PC-3 (cell line): ENCODE measurements at regions of chr12 and their contacts with region 1.

Region 1: DNA sequence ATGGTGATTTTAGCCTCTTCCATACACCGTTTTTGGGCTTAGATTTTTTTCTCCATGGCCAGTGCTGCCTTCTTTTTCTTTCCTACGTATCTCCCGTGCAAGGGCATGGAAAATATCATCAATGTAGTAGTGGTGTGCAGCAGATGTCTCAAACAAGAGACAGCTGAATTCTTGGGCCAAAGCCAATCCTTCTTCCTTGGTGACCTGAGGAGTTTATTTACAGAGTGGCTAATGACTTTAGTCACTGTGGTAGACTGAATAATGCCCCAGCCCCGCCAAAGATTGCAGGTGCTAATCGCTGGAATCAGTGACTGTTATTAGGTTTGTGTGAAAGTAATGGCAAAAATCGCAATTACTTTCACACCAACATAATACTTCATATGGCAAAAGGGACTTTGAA is 235.5 kb upstream of the NOS1 start:
- DNase-seq: peak; percentile 91
- ATAC-seq: peak; percentile 81
- H3K4me3 ChIP-seq: no peak overlapping the region
- H3K27ac ChIP-seq: no peak overlapping the region
- H3K4me1 ChIP-seq: peaks cover 25% of the 10 kb centered on the region
- H3K27me3 ChIP-seq: no peaks in the 10 kb centered on the region
- CTCF ChIP-seq: no peak

Region 2: GRCh38 chr12:117134059-117134458 is 462.9 kb before region 1 on chr12:
- CTCF ChIA-PET with region 1: no interaction called
- POLR2A ChIA-PET with region 1: no interaction called
- intact Hi-C with region 1: no loop called
- DNase-seq: no peak
- ATAC-seq: no peak
- H3K4me3 ChIP-seq: no peak overlapping the region
- H3K27ac ChIP-seq: no peak overlapping the region
- H3K4me1 ChIP-seq: peaks cover 14% of the 10 kb centered on the region
- H3K27me3 ChIP-seq: no peaks in the 10 kb centered on the region
- CTCF ChIP-seq: no peak

Region 3: DNA sequence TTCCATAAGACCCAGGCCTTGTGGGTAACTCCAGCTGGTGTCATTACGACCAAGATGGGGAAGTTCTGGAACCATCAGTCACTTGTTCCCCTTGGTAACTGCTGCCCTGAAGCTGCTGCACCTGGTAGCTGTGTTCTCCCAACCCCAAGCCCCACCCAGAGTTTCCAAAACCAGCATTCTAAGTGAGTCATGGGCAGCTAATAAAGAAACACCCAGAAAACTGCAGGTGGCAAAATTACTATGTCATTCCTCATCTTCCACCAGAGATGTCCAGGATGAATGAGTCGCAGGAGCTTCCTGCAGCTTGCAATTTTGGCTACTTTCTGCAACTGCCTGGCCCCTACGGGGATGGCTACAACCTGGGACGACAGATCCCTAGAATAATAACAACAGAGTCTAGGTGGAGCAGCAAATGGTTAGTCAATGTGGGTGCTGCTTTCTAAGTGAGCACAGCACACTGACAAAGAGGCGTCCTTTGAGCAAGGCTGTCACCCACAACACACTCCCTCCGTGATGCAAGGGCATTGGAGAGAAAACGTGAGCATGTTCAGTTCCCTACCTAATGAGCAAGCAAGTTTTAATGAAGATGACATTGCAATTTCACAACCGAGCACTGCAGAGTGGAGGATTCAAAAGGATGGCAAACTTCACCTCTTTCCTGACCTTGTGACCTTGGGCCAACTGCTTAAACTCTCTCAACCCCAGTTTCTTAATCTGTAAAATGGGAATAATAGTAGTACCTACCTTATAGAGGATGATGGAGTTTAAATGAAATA is 65.8 kb after region 1 on chr12:
- CTCF ChIA-PET with region 1: no interaction called
- POLR2A ChIA-PET with region 1: no interaction called
- intact Hi-C with region 1: loop called (anchors 2 kb)
- DNase-seq: peak; percentile 89
- ATAC-seq: peak; percentile 87
- H3K4me3 ChIP-seq: no peak overlapping the region
- H3K27ac ChIP-seq: peak overlapping the region; percentile 22
- H3K4me1 ChIP-seq: peaks cover 17% of the 10 kb centered on the region
- H3K27me3 ChIP-seq: no peaks in the 10 kb centered on the region
- CTCF ChIP-seq: no peak

Region 4: GRCh38 chr12:118013283-118013682 is 416.3 kb after region 1 on chr12:
- CTCF ChIA-PET with region 1: no interaction called
- POLR2A ChIA-PET with region 1: no interaction called
- intact Hi-C with region 1: no loop called
- DNase-seq: peak; percentile 27
- ATAC-seq: no peak
- H3K4me3 ChIP-seq: no peak overlapping the region
- H3K27ac ChIP-seq: no peak overlapping the region
- H3K4me1 ChIP-seq: peaks cover 17% of the 10 kb centered on the region
- H3K27me3 ChIP-seq: no peaks in the 10 kb centered on the region
- CTCF ChIP-seq: no peak